ENCODE measurements at regions of chr3 and their contacts with region 1.

Region 1: DNA sequence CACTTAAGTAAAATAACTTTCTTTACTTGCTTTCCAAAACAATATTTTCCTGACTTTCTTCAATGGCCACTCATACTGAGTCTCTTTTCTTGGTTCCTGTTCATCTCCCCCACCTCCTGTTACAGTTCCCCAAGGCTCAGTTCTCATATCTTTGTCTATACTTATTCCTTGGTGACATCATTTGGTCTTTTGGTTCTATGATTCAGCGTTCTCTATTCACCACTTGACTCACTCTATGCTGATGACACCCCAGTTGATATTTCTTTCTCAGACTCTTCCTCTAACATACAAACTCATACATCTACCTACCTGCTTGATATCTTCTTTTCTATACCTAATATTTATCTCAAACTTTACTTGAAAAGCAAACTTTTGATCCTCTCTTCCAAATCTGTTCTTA is 85.0 kb upstream of the P3H2 start:
- DNase-seq: no peak
- ATAC-seq: no peak
- H3K4me3 ChIP-seq: no peak overlapping the region
- H3K27ac ChIP-seq: no peak overlapping the region
- H3K4me1 ChIP-seq: peaks cover 0 to 10% (median 0%) of the 10 kb centered on the region in 9 donors
- H3K27me3 ChIP-seq: no peaks in the 10 kb centered on the region
- CTCF ChIP-seq: no peak

Region 2: GRCh38 chr3:190024912-190025311 is 180.8 kb before region 1 on chr3:
- intact Hi-C with region 1: loop called in 1 of 10 experiments (anchors 5 kb)
- DNase-seq: no peak
- ATAC-seq: no peak
- H3K4me3 ChIP-seq: no peak overlapping the region
- H3K27ac ChIP-seq: no peak overlapping the region
- H3K4me1 ChIP-seq: peaks cover 0 to 15% (median 5%) of the 10 kb centered on the region in 9 donors
- H3K27me3 ChIP-seq: no peaks in the 10 kb centered on the region
- CTCF ChIP-seq: no peak

Region 3: GRCh38 chr3:190064112-190064511 is 141.6 kb before region 1 on chr3:
- intact Hi-C with region 1: no loop called
- DNase-seq: no peak
- ATAC-seq: peak in 2 of 8 donors; percentile 16 to 56
- H3K4me3 ChIP-seq: no peak overlapping the region
- H3K27ac ChIP-seq: no peak overlapping the region
- H3K4me1 ChIP-seq: peaks cover 0 to 6% (median 0%) of the 10 kb centered on the region in 9 donors
- H3K27me3 ChIP-seq: no peaks in the 10 kb centered on the region
- CTCF ChIP-seq: no peak

Measured in heart right ventricle (tissue), 16 donors.